Aorta (tissue), 5 donors: ENCODE measurements at regions of chr3 and their contacts with region 1.

Region 1: GRCh38 chr3:114056130-114057010 is at the starts of genes CCDC191 and QTRT2:
- DNase-seq: peak; percentile 99
- ATAC-seq: peak; percentile 100
- H3K4me3 ChIP-seq: peak within 1 kb of the TSS; percentile 81 to 88
- H3K27ac ChIP-seq: peak within 1 kb of the TSS in 1 of 2 donors; percentile 72
- H3K4me1 ChIP-seq: peaks cover 0 to 2% of the 10 kb centered on the region in 2 donors
- H3K27me3 ChIP-seq: no peaks in the 10 kb centered on the region
- total RNA-seq, gene CCDC191: 2.6 to 8.6 TPM
- total RNA-seq, gene QTRT2: 16.2 to 23.4 TPM

Region 2: GRCh38 chr3:113600418-113601182 is 455.8 kb before region 1 on chr3:
- intact Hi-C with region 1: no loop called
- DNase-seq: no peak
- ATAC-seq: peak; percentile 37
- H3K4me3 ChIP-seq: no peak overlapping the region
- H3K27ac ChIP-seq: no peak overlapping the region
- H3K4me1 ChIP-seq: no peaks in the 10 kb centered on the region
- H3K27me3 ChIP-seq: no peaks in the 10 kb centered on the region

Region 3: DNA sequence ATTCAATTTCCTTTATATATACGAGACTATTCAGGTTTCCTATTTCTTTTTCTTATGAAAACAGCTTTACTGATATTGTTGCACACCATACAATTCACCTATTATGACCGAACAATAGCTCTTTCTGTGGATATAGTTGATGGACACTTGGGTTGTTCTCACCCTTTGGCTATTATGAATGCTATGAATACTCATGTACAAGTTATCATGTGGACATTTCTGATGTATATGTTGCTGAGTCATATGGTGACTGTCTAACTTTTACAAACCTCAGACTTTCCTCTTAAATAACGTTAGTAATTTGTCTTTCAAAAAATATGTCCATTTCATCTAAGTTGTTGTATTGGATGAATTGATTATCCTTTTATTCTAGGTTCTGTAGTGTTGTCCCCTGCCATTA is 344.2 kb before region 1 on chr3:
- intact Hi-C with region 1: no loop called
- DNase-seq: no peak
- ATAC-seq: no peak
- H3K4me3 ChIP-seq: no peak overlapping the region
- H3K27ac ChIP-seq: no peak overlapping the region
- H3K4me1 ChIP-seq: no peaks in the 10 kb centered on the region
- H3K27me3 ChIP-seq: no peaks in the 10 kb centered on the region

Region 4: DNA sequence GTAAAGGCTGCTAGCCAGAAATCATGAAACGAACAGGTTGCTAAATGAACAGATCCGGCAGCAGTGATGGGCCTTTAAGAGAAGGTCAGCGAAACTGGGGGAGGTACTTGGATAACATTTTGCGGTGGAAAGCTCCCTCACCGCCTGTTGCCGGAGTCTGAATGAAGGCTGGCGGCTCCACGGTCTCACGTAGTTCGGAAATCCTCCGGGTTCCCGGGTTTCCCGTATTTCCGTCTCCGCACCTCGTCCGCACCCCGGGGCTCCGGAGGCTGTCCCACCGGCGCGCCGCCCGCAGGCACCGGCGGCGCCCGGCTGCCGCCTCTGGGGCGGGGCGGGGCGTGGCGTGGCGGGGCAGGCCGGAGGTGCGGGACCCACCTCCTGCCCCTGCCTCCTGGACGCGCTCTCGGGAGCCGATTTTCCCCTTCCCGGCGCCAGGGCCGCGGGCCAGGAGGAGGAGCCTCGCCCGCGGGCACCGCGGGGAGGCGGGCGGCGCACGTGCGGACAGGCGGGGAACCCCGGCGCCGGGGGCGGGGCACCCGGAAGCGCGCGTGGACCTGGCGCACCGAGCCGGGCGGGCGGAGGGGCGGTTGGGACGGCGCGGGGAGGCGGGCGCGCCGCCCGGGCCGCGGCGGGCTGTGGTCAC is 108.9 kb before region 1 on chr3 and contains the start of gene ZDHHC23:
- intact Hi-C with region 1: loop called in 1 of 2 experiments (anchors 5 kb)
- DNase-seq: peak; percentile 63 to 90
- ATAC-seq: peak; percentile 79
- H3K4me3 ChIP-seq: peak within 1 kb of the TSS; percentile 58 to 91
- H3K27ac ChIP-seq: peak within 1 kb of the TSS in 1 of 2 donors; percentile 21
- H3K4me1 ChIP-seq: no peaks in the 10 kb centered on the region
- H3K27me3 ChIP-seq: no peaks in the 10 kb centered on the region
- total RNA-seq, gene ZDHHC23: 4.1 to 12.7 TPM

Region 5: DNA sequence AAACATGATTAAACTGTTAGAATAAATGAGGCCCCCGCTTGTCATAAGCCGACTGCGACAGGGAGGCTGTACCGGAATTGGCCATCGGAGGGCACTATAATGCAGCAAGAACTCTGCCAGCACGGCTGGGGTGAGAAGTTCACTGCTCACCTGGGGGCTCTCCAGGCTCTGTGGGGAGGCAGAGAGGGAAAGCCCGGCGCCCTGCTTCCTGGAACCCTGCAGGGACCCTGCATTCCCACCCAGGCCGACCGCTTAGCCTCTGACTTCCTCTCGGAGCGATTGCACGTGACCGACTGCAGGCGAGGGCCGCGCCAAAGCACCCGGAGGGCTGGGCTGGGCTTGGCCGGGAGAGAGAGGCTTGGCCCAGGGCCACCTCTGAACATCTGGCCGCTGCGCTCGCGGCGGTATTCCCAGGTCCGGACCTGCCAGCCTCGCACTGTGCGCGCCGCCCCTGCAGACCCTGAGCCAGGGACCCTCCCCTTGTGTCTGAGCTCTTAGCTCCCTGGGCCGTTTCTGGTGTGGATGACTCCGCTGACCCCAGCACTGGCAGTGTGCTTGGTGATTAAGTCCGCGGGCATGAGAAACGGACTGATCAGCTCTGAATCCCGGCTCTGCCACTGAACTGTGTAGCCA is 96.3 kb after region 1 on chr3:
- intact Hi-C with region 1: loop called in 1 of 2 experiments (anchors 2 kb)
- DNase-seq: peak; percentile 87 to 91
- ATAC-seq: peak; percentile 91
- H3K4me3 ChIP-seq: peak overlapping the region; percentile 14 to 34
- H3K27ac ChIP-seq: no peak overlapping the region
- H3K4me1 ChIP-seq: peaks cover 0 to 3% of the 10 kb centered on the region in 2 donors
- H3K27me3 ChIP-seq: no peaks in the 10 kb centered on the region